Adrenal gland (tissue), 19 donors: ENCODE measurements at regions of chr19 and their contacts with region 1.

Region 1: GRCh38 chr19:45523642-45524256 is 16.5 kb downstream of the VASP start:
- DNase-seq: peak; percentile 80 to 93 (median 85)
- H3K4me3 ChIP-seq: no peak overlapping the region
- H3K27ac ChIP-seq: peak overlapping the region in 3 of 5 donors; percentile 17 to 66 (median 42)
- H3K4me1 ChIP-seq: peaks cover 11 to 13% of the 10 kb centered on the region in 2 donors
- H3K27me3 ChIP-seq: no peaks in the 10 kb centered on the region
- CTCF ChIP-seq: peak; percentile 87 to 96 (median 94)
- POLR2A ChIP-seq: no peak

Region 2: GRCh38 chr19:45385392-45386221 is 138.1 kb before region 1 on chr19:
- intact Hi-C with region 1: no loop called
- DNase-seq: peak in 1 of 7 donors; percentile 28
- H3K4me3 ChIP-seq: no peak overlapping the region
- H3K27ac ChIP-seq: no peak overlapping the region
- H3K4me1 ChIP-seq: peaks cover 0 to 7% of the 10 kb centered on the region in 2 donors
- H3K27me3 ChIP-seq: peaks cover 12% of the 10 kb centered on the region
- CTCF ChIP-seq: no peak
- POLR2A ChIP-seq: no peak

Region 3: GRCh38 chr19:45564131-45564780 is 40.5 kb after region 1 on chr19:
- intact Hi-C with region 1: loop called (anchors 5 kb)
- DNase-seq: no peak
- H3K4me3 ChIP-seq: no peak overlapping the region
- H3K27ac ChIP-seq: no peak overlapping the region
- H3K4me1 ChIP-seq: no peaks in the 10 kb centered on the region
- H3K27me3 ChIP-seq: no peaks in the 10 kb centered on the region
- CTCF ChIP-seq: no peak
- POLR2A ChIP-seq: no peak

Region 4: GRCh38 chr19:45569619-45570421 is 46.1 kb after region 1 on chr19:
- intact Hi-C with region 1: loop called in 1 of 2 experiments (anchors 5 kb)
- DNase-seq: peak; percentile 66 to 84 (median 76)
- H3K4me3 ChIP-seq: no peak overlapping the region
- H3K27ac ChIP-seq: no peak overlapping the region
- H3K4me1 ChIP-seq: peaks cover 0 to 5% of the 10 kb centered on the region in 2 donors
- H3K27me3 ChIP-seq: no peaks in the 10 kb centered on the region
- CTCF ChIP-seq: peak; percentile 64 to 87 (median 76)
- POLR2A ChIP-seq: no peak

Region 5: DNA sequence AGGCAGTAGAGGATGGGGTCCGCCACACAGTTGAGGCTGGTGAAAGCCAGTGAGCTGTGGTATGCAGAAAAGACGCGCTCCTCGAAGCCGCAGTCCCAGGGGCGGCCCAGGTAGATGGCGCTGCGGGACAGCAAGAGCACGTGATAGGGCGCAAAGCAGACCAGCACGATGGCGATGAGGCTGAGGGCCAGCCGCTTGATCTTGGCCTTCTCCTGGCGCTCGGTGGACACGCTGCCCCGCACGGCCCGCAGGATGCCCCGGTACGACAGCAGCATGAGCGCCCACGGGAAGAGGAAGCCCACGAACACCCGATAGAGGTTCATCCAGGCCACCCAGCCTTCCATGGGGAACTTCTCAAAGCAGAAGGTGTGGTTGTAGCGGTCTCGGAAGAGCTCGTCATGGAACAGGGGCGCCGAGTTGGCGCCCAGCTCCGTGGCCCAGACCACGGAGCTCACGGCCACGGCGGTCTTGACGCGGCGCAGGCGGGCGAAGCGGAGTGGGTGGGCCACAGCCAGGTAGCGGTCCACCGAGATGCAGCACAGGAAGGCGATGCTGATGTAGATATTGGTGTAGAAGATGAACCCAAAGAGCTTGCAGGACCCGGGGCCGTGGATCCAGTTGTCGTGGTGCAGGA is 67.4 kb after region 1 on chr19:
- intact Hi-C with region 1: no loop called
- DNase-seq: peak; percentile 45 to 79 (median 71)
- H3K4me3 ChIP-seq: no peak overlapping the region
- H3K27ac ChIP-seq: no peak overlapping the region
- H3K4me1 ChIP-seq: peaks cover 4% of the 10 kb centered on the region in 2 donors
- H3K27me3 ChIP-seq: peaks cover 8% of the 10 kb centered on the region
- CTCF ChIP-seq: peak; percentile 22 to 53 (median 41)
- POLR2A ChIP-seq: no peak